OCI-LY7 (cell line): ENCODE measurements at regions of chr3 and their contacts with region 1.

Region 1: GRCh38 chr3:16433701-16434151 is 79.8 kb downstream of the RFTN1 start:
- DNase-seq: peak; percentile 95
- H3K4me3 ChIP-seq: peak overlapping the region; percentile 58
- H3K27ac ChIP-seq: peak overlapping the region; percentile 98
- H3K4me1 ChIP-seq: peaks cover 98% of the 10 kb centered on the region
- CTCF ChIP-seq: no peak

Region 2: DNA sequence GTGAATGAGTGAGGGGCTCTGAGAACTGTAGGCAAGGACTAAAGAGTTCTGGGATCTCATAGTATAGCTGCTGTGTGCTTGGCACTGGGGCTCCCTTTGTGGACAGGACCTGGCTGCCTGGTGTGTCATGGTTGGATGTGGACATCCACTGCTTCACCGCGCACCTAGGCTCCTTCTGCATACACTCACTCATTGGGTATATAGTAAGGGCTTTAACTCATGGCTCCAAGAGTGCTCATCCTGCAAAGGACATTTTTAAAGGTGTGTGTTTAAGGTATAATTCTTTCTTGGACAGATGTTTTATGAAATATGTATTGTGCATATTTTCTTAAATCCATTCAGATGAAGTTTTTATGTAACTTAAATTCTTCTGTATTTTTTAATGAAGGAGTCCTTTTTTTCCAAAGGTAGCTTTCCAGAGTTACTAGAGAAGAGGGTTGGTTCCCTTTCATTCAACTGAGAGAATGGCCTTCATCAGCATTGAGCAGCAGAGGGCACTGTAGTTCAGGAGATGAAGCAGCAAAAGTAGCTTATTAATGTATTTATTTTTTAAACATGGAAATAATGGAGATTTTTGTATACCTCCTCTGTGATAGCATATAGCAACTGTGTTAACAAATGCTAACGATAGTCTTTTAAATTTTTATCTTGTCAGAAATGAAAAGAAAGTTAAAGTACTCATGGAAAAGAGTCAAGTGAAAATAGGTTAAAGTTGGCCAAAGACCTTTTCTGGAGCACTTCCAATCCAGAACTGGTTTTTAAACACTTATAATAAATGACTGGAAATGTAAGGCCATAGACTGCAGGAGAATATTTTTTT is 143.5 kb before region 1 on chr3:
- CTCF ChIA-PET with region 1: no interaction called
- POLR2A ChIA-PET with region 1: no interaction called
- intact Hi-C with region 1: loop called (anchors 5 kb)
- DNase-seq: peak; percentile 62
- H3K4me3 ChIP-seq: no peak overlapping the region
- H3K27ac ChIP-seq: peak overlapping the region; percentile 34
- H3K4me1 ChIP-seq: peaks cover 22% of the 10 kb centered on the region
- CTCF ChIP-seq: peak; percentile 100

Region 3: DNA sequence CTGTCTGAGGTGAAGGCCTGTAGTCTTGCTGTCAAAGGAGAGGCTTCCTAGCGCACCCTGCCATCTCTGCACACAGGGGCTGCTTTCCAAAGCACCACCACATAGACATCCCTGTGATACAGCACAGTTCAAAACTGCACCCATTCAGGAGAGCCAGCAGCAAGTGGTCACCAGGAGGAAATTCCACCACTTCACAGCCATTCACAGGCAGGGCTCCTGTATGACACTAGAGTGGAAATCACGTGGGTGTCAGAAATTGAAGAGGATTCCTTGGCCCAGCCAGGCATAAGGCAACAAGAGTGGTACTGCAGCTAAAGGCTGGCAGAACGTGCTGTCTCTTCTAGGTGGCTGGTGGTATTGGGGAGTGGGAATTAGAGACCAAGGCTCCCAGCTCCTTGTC is 23.1 kb before region 1 on chr3:
- CTCF ChIA-PET with region 1: interaction called, 3 read pairs
- POLR2A ChIA-PET with region 1: interaction called, 13 read pairs
- intact Hi-C with region 1: no loop called
- DNase-seq: no peak
- H3K4me3 ChIP-seq: peak overlapping the region; percentile 3
- H3K27ac ChIP-seq: peak overlapping the region; percentile 71
- H3K4me1 ChIP-seq: peaks cover 76% of the 10 kb centered on the region
- CTCF ChIP-seq: no peak

Region 4: GRCh38 chr3:16448639-16449070 is 14.9 kb after region 1 on chr3:
- CTCF ChIA-PET with region 1: no interaction called
- POLR2A ChIA-PET with region 1: interaction called, 15 read pairs
- intact Hi-C with region 1: no loop called
- DNase-seq: peak; percentile 64
- H3K4me3 ChIP-seq: peak overlapping the region; percentile 7
- H3K27ac ChIP-seq: peak overlapping the region; percentile 93
- H3K4me1 ChIP-seq: peaks cover 100% of the 10 kb centered on the region
- CTCF ChIP-seq: no peak

Region 5: GRCh38 chr3:16511681-16512434 is 78.1 kb after region 1 on chr3:
- CTCF ChIA-PET with region 1: no interaction called
- POLR2A ChIA-PET with region 1: interaction called, 59 read pairs
- intact Hi-C with region 1: loop called (anchors 1 kb)
- DNase-seq: peak; percentile 92
- H3K4me3 ChIP-seq: peak overlapping the region; percentile 92
- H3K27ac ChIP-seq: peak overlapping the region; percentile 93
- H3K4me1 ChIP-seq: peaks cover 74% of the 10 kb centered on the region
- CTCF ChIP-seq: no peak

Region 6: GRCh38 chr3:16897254-16897926 is 463.7 kb after region 1 on chr3:
- CTCF ChIA-PET with region 1: no interaction called
- POLR2A ChIA-PET with region 1: no interaction called
- intact Hi-C with region 1: loop called (anchors 10 kb)
- DNase-seq: peak; percentile 91
- H3K4me3 ChIP-seq: peak overlapping the region; percentile 65
- H3K27ac ChIP-seq: peak overlapping the region; percentile 77
- H3K4me1 ChIP-seq: peaks cover 94% of the 10 kb centered on the region
- CTCF ChIP-seq: no peak